ENCODE measurements at regions of chr12 and their contacts with region 1.

Region 1: DNA sequence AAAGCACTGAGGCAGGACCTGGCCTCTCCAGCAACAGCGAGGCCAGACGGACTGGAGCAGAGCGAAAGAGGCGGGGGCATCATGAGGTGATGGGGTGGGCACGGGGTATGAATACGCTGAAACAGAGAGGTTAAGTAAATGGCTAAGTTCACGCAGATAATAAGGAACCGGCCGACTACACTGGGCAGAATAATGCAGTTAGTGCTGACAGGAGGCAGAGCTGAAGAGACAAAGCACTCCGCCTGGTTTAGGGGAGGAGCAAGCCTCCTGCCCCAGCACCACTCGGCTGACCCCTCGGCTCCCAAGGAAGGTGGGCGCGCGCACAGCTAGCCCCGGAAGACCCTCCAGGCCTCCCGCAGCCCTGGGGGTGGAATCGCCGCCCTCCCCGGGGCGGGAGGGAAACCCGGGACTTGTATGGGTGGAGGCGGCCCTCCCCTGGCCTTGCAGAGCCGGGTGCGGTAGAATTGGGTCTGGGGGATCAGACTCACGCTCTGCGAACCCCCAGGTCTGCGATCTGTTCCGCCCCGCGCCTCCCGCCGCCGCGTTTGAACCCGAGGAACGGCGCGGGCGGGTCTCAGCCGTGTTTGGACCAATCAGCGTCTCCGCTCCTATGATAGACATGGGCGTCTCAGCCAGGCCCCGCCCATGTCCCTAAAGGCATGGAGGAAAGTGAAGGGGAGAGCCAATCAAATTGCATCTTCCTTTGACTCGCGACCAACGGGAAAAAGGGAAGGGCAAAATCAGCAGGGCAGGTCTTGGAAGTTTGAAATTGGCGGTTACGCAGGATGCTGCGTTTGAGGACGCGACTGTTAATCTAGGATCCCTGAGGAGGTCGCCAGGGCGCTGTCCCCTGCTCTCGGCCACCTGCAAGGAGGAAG is at the start of gene CIT:
- DNase-seq: peak; percentile 96
- H3K4me3 ChIP-seq: peak within 1 kb of the TSS; percentile 79 to 96 (median 89)
- H3K27ac ChIP-seq: peak within 1 kb of the TSS; percentile 45
- H3K4me1 ChIP-seq: peaks cover 4% of the 10 kb centered on the region
- H3K27me3 ChIP-seq: peaks cover 0 to 4% of the 10 kb centered on the region in 2 experiments
- CTCF ChIP-seq: no peak
- POLR2A ChIP-seq: no peak
- total RNA-seq, gene CIT: 50.1 and 61.8 TPM in 2 replicates

Region 2: DNA sequence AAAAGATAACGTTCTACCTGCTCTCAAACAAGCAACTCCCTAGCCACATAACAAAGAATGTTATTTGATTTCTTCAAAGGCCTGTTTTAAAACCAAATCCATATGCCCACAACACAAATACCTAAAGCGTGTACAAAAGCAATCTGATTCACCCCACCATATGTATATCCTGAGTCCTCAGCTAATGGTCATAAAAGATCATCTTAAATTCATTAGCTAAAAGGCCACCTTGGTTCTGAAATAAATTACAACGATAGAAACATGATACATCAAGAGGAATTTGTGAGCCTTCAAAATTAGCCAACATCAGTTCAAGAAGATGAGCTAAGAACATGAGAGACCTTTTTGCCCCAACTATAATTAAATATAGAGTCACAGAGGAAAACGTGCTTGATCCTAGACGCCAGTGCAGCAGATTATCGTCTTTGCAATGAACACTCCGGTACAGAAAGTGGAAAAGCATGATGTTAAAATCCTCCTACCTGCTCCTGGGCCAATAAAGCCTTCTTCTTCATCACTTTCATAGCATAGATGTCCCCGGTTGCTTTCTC is 19.9 kb before region 1 on chr12:
- CTCF ChIA-PET with region 1: no interaction called
- POLR2A ChIA-PET with region 1: no interaction called
- dilution Hi-C with region 1: no loop called
- intact Hi-C with region 1: no loop called
- DNase-seq: no peak
- H3K4me3 ChIP-seq: no peak overlapping the region
- H3K27ac ChIP-seq: no peak overlapping the region
- H3K4me1 ChIP-seq: no peaks in the 10 kb centered on the region
- H3K27me3 ChIP-seq: no peaks in the 10 kb centered on the region
- CTCF ChIP-seq: no peak
- POLR2A ChIP-seq: no peak

Region 3: DNA sequence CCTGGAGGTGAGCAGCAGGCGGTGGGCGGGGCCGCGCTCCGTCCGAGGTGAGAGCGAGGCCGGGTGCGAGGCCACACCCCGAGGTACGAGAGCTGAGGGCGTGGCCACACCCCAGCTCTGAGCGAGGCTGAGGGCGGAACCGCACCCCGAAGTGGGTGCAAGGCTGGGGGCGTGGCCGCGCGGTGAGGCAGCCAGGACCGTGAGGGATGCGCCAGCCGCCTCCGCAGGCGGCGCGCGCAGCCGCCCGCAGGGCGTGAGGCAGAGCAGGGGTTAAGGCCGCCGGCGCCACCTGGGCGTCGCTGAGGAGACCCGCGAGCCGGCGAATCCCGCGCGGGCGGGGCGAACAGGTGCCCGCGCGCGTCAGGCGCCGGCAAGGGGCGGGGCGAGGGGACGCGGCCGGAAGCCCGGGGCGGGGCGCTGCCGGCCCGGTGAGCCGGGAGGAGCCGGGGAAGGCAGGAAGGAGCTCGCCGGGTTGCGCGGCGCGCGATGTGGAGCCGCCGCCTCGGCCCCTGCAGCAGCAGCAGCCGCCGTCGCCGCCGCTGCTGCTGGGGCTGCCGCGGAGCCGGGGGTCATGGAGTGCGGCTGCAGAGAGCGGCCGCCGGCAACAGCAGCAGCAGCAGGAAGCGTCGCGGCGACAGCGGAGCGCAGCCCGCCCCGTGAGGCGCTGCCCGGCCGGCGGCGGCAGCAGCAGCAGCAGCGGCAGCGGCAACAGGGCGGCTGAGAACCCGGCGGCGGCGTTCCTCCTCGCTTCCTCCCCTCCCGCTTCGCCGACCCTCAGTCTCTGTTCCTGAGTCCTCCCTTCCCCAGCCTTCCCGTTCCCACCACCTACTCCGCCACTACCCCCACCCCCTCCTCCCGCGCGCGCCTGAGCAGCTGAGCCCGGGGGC is 112.0 kb after region 1 on chr12 and contains the start of gene BICDL1:
- CTCF ChIA-PET with region 1: no interaction called
- POLR2A ChIA-PET with region 1: no interaction called
- dilution Hi-C with region 1: no loop called
- intact Hi-C with region 1: loop called (anchors 1 kb)
- DNase-seq: peak; percentile 25
- H3K4me3 ChIP-seq: peak within 1 kb of the TSS in 2 of 3 experiments; percentile 11 to 46
- H3K27ac ChIP-seq: no peak within 1 kb of the TSS
- H3K4me1 ChIP-seq: no peaks in the 10 kb centered on the region
- H3K27me3 ChIP-seq: peaks cover 31 to 43% of the 10 kb centered on the region in 2 experiments
- CTCF ChIP-seq: no peak
- POLR2A ChIP-seq: no peak
- total RNA-seq, gene BICDL1: not detected in 2 replicates

Region 4: GRCh38 chr12:120055231-120056021 is 178.4 kb after region 1 on chr12:
- CTCF ChIA-PET with region 1: no interaction called
- POLR2A ChIA-PET with region 1: no interaction called
- dilution Hi-C with region 1: no loop called
- intact Hi-C with region 1: no loop called
- DNase-seq: no peak
- H3K4me3 ChIP-seq: no peak overlapping the region
- H3K27ac ChIP-seq: no peak overlapping the region
- H3K4me1 ChIP-seq: no peaks in the 10 kb centered on the region
- H3K27me3 ChIP-seq: peaks cover 0 to 4% of the 10 kb centered on the region in 2 experiments
- CTCF ChIP-seq: no peak
- POLR2A ChIP-seq: no peak

Measured in endothelial cell of umbilical vein (primary cell).